Activated CD8-positive, alpha-beta memory T cell treated with anti-CD3 and anti-CD28 coated beads, Interleukin-2, amount 10 ng/mL, durations not matched to agents 7 days and 5 days (primary cell): ENCODE measurements at regions of chr16 and their contacts with region 1.

Region 1: DNA sequence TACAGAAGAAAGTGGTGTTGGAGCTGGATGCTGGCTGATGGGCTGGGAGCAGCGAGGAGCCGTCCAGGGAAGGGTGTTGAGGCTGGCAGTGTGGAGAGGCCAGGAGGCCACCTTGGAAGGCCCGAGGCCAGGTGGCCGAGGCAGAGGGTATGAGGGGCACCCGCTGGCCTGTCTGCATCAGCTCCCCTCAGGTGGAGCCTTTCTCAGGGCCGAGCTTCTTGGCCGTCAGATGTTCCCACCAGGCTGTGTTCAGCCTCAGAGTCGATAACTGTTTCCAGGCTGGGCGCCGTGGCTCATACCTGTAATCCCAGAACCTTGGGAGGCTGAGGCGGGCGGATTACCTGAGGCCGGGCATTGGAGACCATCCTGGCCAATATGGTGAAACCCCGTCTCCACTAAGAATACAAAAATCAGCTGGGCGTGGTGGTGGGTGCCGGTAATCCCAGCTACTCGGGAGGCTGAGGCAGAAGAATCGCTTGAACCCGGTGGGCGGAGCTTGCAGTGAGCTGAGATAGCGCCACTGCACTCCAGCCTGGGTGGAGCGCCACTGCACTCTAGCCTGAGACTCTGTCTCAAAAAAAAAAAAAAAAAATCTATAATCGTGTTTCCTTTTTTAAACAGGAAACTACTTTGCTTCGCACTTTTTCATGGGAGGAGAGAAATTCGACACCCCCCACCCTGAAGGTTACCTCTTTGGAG is 25.3 kb downstream of the MGRN1 start:
- DNase-seq: no peak
- ATAC-seq: peak; percentile 22
- H3K4me3 Mint-ChIP-seq: no peak overlapping the region
- H3K27ac Mint-ChIP-seq: peak overlapping the region; percentile 58
- H3K4me1 Mint-ChIP-seq: peaks cover 15% of the 10 kb centered on the region
- H3K27me3 Mint-ChIP-seq: peaks cover 4% of the 10 kb centered on the region

Region 2: GRCh38 chr16:4660454-4661007 is 10.6 kb after region 1 on chr16:
- CTCF ChIA-PET with region 1: interaction called, 10 read pairs
- DNase-seq: peak; percentile 82
- ATAC-seq: peak; percentile 51
- H3K4me3 Mint-ChIP-seq: no peak overlapping the region
- H3K27ac Mint-ChIP-seq: peak overlapping the region; percentile 68
- H3K4me1 Mint-ChIP-seq: peaks cover 50% of the 10 kb centered on the region
- H3K27me3 Mint-ChIP-seq: no peaks in the 10 kb centered on the region